Activated naive CD8-positive, alpha-beta T cell treated with anti-CD3 and anti-CD28 coated beads, Interleukin-2, amount 10 ng/mL, durations not matched to agents 7 days and 5 days (primary cell): ENCODE measurements at regions of chr7 and their contacts with region 1.

Region 1: DNA sequence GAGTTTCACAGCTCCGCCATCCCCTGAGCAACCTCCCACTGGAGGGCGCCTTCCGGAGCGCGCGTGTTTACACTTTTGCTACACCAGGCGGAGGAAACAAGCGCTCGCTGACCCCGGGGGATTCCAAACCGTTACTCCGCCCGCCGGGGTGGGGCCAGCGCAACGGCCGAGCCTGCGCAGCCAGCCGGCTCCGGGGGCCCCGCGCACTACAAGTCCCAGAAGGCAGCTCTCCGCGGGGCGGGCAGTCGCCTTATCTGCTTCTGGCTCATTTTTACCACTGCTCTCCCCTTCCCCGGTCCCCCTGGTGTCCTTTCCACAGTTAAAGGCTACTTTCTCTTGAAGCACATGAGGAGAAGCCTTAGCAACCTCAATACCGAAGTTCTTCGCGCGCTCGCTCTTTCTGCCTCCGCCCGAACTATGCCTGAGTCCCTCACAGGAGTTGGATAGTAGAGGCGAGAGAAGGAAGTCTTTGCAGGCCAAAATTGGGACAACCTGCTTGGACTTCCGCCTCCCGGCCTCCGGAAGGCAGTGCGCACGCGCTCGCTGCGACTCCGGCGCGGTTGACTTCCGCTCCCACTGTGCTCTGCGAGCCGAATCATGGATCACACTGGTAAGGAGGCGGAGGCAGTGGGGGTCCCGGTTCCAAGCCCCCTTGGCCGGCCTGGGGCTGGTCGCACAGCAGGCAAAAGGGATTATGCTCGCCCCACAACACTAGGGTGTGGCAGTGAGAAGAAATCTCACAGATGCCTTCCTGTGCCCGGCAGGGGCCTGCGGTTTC is at the start of gene CBLL1:
- DNase-seq: peak; percentile 98
- ATAC-seq: peak; percentile 93
- H3K4me3 Mint-ChIP-seq: peak within 1 kb of the TSS; percentile 95
- H3K27ac Mint-ChIP-seq: peak within 1 kb of the TSS; percentile 100
- H3K4me1 Mint-ChIP-seq: peaks cover 20% of the 10 kb centered on the region
- H3K27me3 Mint-ChIP-seq: no peaks in the 10 kb centered on the region
- total RNA-seq, gene CBLL1: 52.1 to 57.0 TPM

Region 2: GRCh38 chr7:107168233-107169119 is 575.3 kb before region 1 on chr7 and contains the start of gene HBP1:
- POLR2A ChIA-PET with region 1: interaction called, 19 read pairs
- DNase-seq: peak; percentile 90
- ATAC-seq: peak; percentile 89
- H3K4me3 Mint-ChIP-seq: peak within 1 kb of the TSS; percentile 96
- H3K27ac Mint-ChIP-seq: peak within 1 kb of the TSS; percentile 98
- H3K4me1 Mint-ChIP-seq: peaks cover 17% of the 10 kb centered on the region
- H3K27me3 Mint-ChIP-seq: peaks cover 2% of the 10 kb centered on the region
- total RNA-seq, gene HBP1: 56.4 to 58.3 TPM

Region 3: GRCh38 chr7:107563775-107564552 is 179.8 kb before region 1 on chr7 and contains the starts of genes COG5 and DUS4L:
- POLR2A ChIA-PET with region 1: interaction called, 12 read pairs
- DNase-seq: peak; percentile 89
- ATAC-seq: peak; percentile 85
- H3K4me3 Mint-ChIP-seq: peak within 1 kb of the TSS; percentile 93
- H3K27ac Mint-ChIP-seq: peak within 1 kb of the TSS; percentile 95
- H3K4me1 Mint-ChIP-seq: peaks cover 54% of the 10 kb centered on the region
- H3K27me3 Mint-ChIP-seq: no peaks in the 10 kb centered on the region
- total RNA-seq, gene COG5: 51.0 to 56.2 TPM
- total RNA-seq, gene DUS4L: 10.1 to 11.8 TPM

Region 4: DNA sequence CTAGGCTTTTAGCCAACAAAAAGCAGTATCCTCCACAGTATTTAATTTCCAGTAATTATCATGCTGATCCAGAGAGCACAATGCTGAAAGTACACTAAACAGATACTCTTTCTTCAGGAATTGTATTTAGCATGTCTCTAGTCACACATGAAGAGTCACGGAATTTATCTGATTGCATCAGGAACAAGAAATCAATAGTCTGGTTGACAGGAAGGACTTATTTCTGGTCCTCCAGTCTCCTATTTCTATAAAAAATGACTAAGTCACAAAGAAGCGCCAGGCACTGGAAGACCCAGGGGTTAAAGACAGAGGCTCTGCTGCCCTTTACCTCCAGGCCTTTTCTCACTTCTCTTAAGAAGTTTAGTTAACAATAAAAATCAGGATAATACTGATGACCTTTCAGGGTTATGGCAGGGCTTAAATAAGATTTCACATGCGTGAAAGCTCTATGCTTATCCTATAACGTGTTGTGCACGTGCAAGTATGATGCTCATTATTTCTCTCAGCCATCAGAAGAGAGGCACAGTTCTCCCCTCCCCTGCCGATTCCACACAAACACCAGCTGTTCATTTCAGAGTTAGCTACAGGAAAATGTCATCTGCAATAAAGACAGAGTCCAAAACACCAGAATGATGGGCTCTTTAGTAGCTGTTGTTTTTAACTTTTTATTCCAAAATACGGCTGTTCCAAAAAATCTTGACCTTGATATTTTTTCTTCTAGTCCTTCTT is 46.3 kb before region 1 on chr7:
- POLR2A ChIA-PET with region 1: no interaction called
- DNase-seq: no peak
- ATAC-seq: no peak
- H3K4me3 Mint-ChIP-seq: no peak overlapping the region
- H3K27ac Mint-ChIP-seq: no peak overlapping the region
- H3K4me1 Mint-ChIP-seq: peaks cover 1% of the 10 kb centered on the region
- H3K27me3 Mint-ChIP-seq: no peaks in the 10 kb centered on the region

Region 5: DNA sequence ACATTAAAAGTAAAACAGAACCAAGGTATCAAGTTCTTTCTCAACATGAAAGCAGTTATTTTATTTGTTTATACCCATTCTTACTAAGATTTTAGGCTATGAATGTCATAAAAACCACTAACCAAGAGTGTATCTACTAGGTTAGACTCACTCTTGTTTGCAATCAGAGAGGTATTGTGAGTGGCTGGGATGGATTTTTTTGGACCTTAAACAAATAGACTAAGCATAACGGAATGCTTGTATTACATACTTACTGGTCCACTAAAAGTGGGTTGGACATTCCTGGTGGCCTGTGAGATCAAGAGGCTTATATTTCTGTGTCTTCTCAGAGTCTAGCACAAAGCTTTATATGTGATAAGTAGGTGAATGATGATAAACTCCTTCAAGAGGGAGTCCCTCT is 32.5 kb before region 1 on chr7:
- POLR2A ChIA-PET with region 1: no interaction called
- DNase-seq: no peak
- ATAC-seq: no peak
- H3K4me3 Mint-ChIP-seq: no peak overlapping the region
- H3K27ac Mint-ChIP-seq: no peak overlapping the region
- H3K4me1 Mint-ChIP-seq: no peaks in the 10 kb centered on the region
- H3K27me3 Mint-ChIP-seq: no peaks in the 10 kb centered on the region

Region 6: GRCh38 chr7:107874605-107875446 is 131.1 kb after region 1 on chr7:
- POLR2A ChIA-PET with region 1: interaction called, 16 read pairs
- DNase-seq: no peak
- ATAC-seq: peak; percentile 64
- H3K4me3 Mint-ChIP-seq: no peak overlapping the region
- H3K27ac Mint-ChIP-seq: no peak overlapping the region
- H3K4me1 Mint-ChIP-seq: peaks cover 18% of the 10 kb centered on the region
- H3K27me3 Mint-ChIP-seq: peaks cover 7% of the 10 kb centered on the region

Region 7: DNA sequence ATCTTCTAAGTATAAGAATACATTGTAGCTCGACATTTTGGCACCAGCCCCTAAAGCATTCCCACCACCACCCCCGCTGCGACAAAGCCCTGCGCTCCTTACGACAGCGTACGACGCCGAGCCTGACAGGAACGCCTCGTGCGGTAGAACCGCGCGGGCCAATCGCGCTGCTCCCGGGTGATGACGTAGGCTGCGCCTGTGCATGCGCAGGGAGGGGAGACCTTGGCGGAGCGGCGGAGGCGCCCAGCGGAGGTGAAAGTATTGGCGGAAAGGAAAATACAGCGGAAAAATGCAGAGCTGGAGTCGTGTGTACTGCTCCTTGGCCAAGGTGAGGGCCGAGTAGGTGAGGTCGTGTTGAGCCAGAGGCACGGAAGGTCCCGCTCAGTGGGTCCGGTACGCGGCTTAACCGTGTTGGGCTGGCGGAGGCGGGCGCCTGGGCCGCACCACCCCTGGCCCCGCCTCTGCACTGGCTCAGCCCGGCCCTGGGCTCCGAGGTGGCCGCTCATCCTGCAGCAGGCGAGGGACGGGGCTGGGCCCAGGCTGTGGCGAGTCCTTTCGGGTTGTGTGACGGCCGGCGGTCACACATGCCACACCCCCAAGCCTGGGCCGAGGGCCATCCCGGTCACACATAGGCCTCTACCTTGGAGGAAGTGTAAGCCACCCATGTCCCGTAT is 147.3 kb after region 1 on chr7 and contains the start of gene DLD:
- POLR2A ChIA-PET with region 1: interaction called, 19 read pairs
- DNase-seq: peak; percentile 93
- ATAC-seq: peak; percentile 99
- H3K4me3 Mint-ChIP-seq: peak within 1 kb of the TSS; percentile 100
- H3K27ac Mint-ChIP-seq: peak within 1 kb of the TSS; percentile 100
- H3K4me1 Mint-ChIP-seq: peaks cover 35% of the 10 kb centered on the region
- H3K27me3 Mint-ChIP-seq: no peaks in the 10 kb centered on the region
- total RNA-seq, gene DLD: 56.3 to 56.9 TPM